WTC11 (cell line): ENCODE measurements at regions of chr10 and their contacts with region 1.

Region 1: GRCh38 chr10:98028168-98028770 is 2.2 kb downstream of the CRTAC1 start:
- DNase-seq: peak; percentile 87
- ATAC-seq: peak; percentile 55
- H3K4me3 Mint-ChIP-seq: peak overlapping the region; percentile 52
- H3K27ac Mint-ChIP-seq: no peak overlapping the region
- H3K4me1 Mint-ChIP-seq: peaks cover 26% of the 10 kb centered on the region
- H3K27me3 Mint-ChIP-seq: peaks cover 68% of the 10 kb centered on the region
- CTCF ChIP-seq: peak; percentile 97

Region 2: DNA sequence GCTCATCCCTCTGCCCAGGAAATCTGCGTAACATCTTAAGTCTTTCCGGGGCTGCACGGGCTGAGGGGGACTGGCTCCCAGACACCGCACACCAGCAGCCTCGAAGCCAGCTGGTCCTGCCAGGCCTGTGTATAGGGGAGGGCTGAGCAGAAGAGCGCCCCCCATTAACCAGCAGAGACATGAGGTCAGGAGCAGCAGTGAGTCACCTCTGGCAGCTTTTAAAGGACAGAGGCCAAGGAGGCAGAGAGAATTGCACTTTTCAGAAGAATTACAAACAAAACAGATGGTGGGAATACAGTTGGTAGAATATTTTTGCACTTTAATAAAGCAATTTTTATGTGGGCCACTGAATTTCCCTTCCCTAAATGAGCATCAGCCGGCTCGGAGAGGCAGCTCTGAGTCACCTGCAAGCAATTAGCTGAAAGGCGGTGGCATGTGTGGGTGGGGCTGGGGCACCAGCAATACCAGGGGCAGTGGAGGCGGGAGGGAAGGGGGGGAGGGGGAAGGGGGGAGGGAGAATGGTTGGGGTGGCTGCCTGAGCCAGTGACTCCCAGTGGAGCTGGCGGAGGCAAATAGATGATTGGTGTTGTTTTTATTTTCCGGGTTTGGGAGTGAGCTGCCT is 139.5 kb before region 1 on chr10:
- CTCF ChIA-PET with region 1: interaction called, 12 read pairs
- POLR2A ChIA-PET with region 1: no interaction called
- DNase-seq: no peak
- ATAC-seq: peak; percentile 54
- H3K4me3 Mint-ChIP-seq: no peak overlapping the region
- H3K27ac Mint-ChIP-seq: no peak overlapping the region
- H3K4me1 Mint-ChIP-seq: peaks cover 35% of the 10 kb centered on the region
- H3K27me3 Mint-ChIP-seq: no peaks in the 10 kb centered on the region; the same call in 1 of the 2 replicates
- CTCF ChIP-seq: no peak

Region 3: GRCh38 chr10:97914837-97915211 is 113.4 kb before region 1 on chr10:
- CTCF ChIA-PET with region 1: interaction called, 30 read pairs
- POLR2A ChIA-PET with region 1: interaction called, 3 read pairs
- DNase-seq: peak; percentile 93
- ATAC-seq: peak; percentile 95
- H3K4me3 Mint-ChIP-seq: no peak overlapping the region
- H3K27ac Mint-ChIP-seq: no peak overlapping the region
- H3K4me1 Mint-ChIP-seq: peaks cover 8% of the 10 kb centered on the region
- H3K27me3 Mint-ChIP-seq: peaks cover 23% of the 10 kb centered on the region
- CTCF ChIP-seq: peak; percentile 86

Region 4: GRCh38 chr10:97999066-97999922 is 29.0 kb before region 1 on chr10:
- CTCF ChIA-PET with region 1: interaction called, 14 read pairs
- POLR2A ChIA-PET with region 1: no interaction called
- DNase-seq: peak; percentile 28
- ATAC-seq: peak; percentile 58; the same call in 1 of the 2 replicates
- H3K4me3 Mint-ChIP-seq: no peak overlapping the region
- H3K27ac Mint-ChIP-seq: no peak overlapping the region
- H3K4me1 Mint-ChIP-seq: peaks cover 7% of the 10 kb centered on the region
- H3K27me3 Mint-ChIP-seq: peaks cover 3% of the 10 kb centered on the region
- CTCF ChIP-seq: no peak

Region 5: GRCh38 chr10:98013122-98013521 is 15.1 kb before region 1 on chr10:
- CTCF ChIA-PET with region 1: interaction called, 32 read pairs
- POLR2A ChIA-PET with region 1: interaction called, 4 read pairs
- DNase-seq: no peak
- ATAC-seq: peak; percentile 20; the same call in 1 of the 2 replicates
- H3K4me3 Mint-ChIP-seq: no peak overlapping the region
- H3K27ac Mint-ChIP-seq: no peak overlapping the region
- H3K4me1 Mint-ChIP-seq: peaks cover 28% of the 10 kb centered on the region
- H3K27me3 Mint-ChIP-seq: 0 out of 2 replicates have a peak, but pooled peaks cover under 1% of the 10 kb centered on the region
- CTCF ChIP-seq: peak; percentile 36; the same call in 1 of the 2 replicates

Region 6: DNA sequence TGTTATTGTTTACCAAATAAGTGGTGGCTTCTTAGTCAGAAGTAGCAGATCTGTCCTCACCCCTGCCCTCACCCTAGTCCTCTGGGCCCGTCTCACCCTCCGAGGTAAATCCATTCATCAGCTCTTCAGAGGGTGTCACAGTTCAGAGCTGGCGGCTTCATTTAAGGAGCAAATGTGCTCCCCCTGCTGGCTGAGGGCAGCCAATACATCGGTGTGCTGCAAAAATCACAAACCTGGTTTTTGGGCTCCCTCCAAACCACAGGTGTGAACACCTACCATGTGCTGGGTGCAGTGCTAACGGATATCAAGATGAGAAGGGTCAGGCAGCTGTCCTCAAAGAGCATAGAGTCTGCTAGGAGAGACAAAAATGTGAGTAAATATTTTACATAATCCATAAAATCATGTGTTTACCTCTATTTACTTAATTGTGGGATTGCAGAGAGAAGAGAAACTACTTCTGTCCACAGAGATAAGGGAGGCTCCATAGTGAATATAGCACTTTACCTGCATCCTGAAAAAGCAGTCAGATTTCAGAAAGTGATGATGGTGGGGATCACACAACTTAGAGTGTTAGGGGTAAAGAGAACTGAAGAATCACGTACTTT is 17.6 kb after region 1 on chr10:
- CTCF ChIA-PET with region 1: interaction called, 119 read pairs
- POLR2A ChIA-PET with region 1: interaction called, 4 read pairs
- DNase-seq: peak; percentile 73
- ATAC-seq: peak; percentile 92
- H3K4me3 Mint-ChIP-seq: no peak overlapping the region
- H3K27ac Mint-ChIP-seq: no peak overlapping the region
- H3K4me1 Mint-ChIP-seq: no peaks in the 10 kb centered on the region
- H3K27me3 Mint-ChIP-seq: peaks cover 28% of the 10 kb centered on the region
- CTCF ChIP-seq: peak; percentile 83